CD8-positive, alpha-beta T cell (primary cell): ENCODE measurements at regions of chr3 and their contacts with region 1.

Region 1: GRCh38 chr3:187738331-187739093 is 6.8 kb downstream of the BCL6 start:
- DNase-seq: peak; percentile 38 to 88 (median 65)
- ATAC-seq: peak; percentile 32
- H3K4me3 ChIP-seq: peak overlapping the region; percentile 88 to 94
- H3K4me3 Mint-ChIP-seq: peak overlapping the region; percentile 94
- H3K27ac ChIP-seq: peak overlapping the region; percentile 44 to 88
- H3K27ac Mint-ChIP-seq: peak overlapping the region; percentile 100
- H3K4me1 ChIP-seq: peaks cover 15% of the 10 kb centered on the region
- H3K4me1 Mint-ChIP-seq: peaks cover 52% of the 10 kb centered on the region
- H3K27me3 ChIP-seq: no peaks in the 10 kb centered on the region
- H3K27me3 Mint-ChIP-seq: no peaks in the 10 kb centered on the region
- CTCF ChIP-seq: peak; percentile 85

Region 2: GRCh38 chr3:187719628-187720336 is 18.7 kb before region 1 on chr3:
- CTCF ChIA-PET with region 1: interaction called, 31 read pairs
- POLR2A ChIA-PET with region 1: interaction called, 3 read pairs
- intact Hi-C with region 1: no loop called
- DNase-seq: no peak
- ATAC-seq: no peak
- H3K4me3 ChIP-seq: no peak overlapping the region
- H3K4me3 Mint-ChIP-seq: no peak overlapping the region
- H3K27ac ChIP-seq: no peak overlapping the region
- H3K27ac Mint-ChIP-seq: no peak overlapping the region
- H3K4me1 ChIP-seq: no peaks in the 10 kb centered on the region
- H3K4me1 Mint-ChIP-seq: no peaks in the 10 kb centered on the region
- H3K27me3 ChIP-seq: no peaks in the 10 kb centered on the region
- H3K27me3 Mint-ChIP-seq: no peaks in the 10 kb centered on the region
- CTCF ChIP-seq: no peak

Region 3: DNA sequence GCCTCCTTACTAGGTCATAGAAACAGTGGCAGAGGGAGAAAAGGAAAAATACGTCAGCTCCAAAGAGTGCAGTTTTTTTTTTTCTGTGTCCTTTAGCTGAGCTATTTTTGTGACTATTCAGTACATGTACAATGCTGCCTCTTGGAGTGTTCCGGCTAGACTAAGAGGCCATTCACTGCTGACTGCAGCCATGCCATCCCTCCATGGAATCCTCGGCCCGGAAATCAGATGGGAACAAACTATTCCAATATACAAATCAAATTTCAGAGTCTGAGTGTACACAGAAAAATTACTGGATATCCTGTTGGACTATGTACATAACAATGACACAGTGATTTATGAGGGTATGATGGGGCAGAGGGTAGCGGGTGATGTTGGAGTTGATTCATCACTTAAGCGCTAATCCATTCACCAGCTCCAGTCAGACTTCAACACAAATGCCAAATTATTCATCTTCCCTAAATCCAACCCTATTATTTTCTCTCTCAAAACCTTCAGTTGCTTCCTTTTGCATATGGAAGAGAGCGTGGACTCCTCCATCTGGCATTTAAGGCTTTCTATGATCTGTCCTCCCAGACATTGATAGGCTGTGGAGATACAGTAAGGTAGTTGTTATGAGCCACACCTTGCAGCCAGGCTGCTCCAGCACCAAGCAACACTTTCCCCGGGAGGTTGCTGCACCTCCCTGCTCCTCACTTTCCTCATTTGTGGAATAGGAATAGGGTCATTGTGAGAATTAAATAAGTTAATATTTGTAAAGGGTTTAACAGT is 524.6 kb after region 1 on chr3:
- CTCF ChIA-PET with region 1: interaction called, 11 read pairs
- POLR2A ChIA-PET with region 1: no interaction called
- intact Hi-C with region 1: no loop called
- DNase-seq: no peak
- ATAC-seq: no peak
- H3K4me3 ChIP-seq: no peak overlapping the region
- H3K4me3 Mint-ChIP-seq: no peak overlapping the region
- H3K27ac ChIP-seq: no peak overlapping the region
- H3K27ac Mint-ChIP-seq: no peak overlapping the region
- H3K4me1 ChIP-seq: no peaks in the 10 kb centered on the region
- H3K4me1 Mint-ChIP-seq: peaks cover 4% of the 10 kb centered on the region
- H3K27me3 ChIP-seq: no peaks in the 10 kb centered on the region
- H3K27me3 Mint-ChIP-seq: no peaks in the 10 kb centered on the region
- CTCF ChIP-seq: no peak

Region 4: GRCh38 chr3:188439080-188439479 is 700.6 kb after region 1 on chr3:
- CTCF ChIA-PET with region 1: interaction called, 3 read pairs
- POLR2A ChIA-PET with region 1: no interaction called
- intact Hi-C with region 1: loop called in 1 of 2 experiments (anchors 5 kb)
- DNase-seq: peak in 6 of 9 experiments; percentile 20 to 78 (median 34)
- ATAC-seq: peak; percentile 88
- H3K4me3 ChIP-seq: no peak overlapping the region
- H3K4me3 Mint-ChIP-seq: peak overlapping the region; percentile 48
- H3K27ac ChIP-seq: peak overlapping the region in 1 of 2 experiments; percentile 78
- H3K27ac Mint-ChIP-seq: peak overlapping the region; percentile 41
- H3K4me1 ChIP-seq: peaks cover 17% of the 10 kb centered on the region
- H3K4me1 Mint-ChIP-seq: peaks cover 44% of the 10 kb centered on the region
- H3K27me3 ChIP-seq: no peaks in the 10 kb centered on the region
- H3K27me3 Mint-ChIP-seq: no peaks in the 10 kb centered on the region
- CTCF ChIP-seq: no peak

Region 5: GRCh38 chr3:188830893-188831292 is 1092.4 kb after region 1 on chr3:
- CTCF ChIA-PET with region 1: interaction called, 7 read pairs
- POLR2A ChIA-PET with region 1: interaction called, 3 read pairs
- intact Hi-C with region 1: loop called in 1 of 2 experiments (anchors 5 kb)
- DNase-seq: peak in 1 of 9 experiments; percentile 9
- ATAC-seq: no peak
- H3K4me3 ChIP-seq: no peak overlapping the region
- H3K4me3 Mint-ChIP-seq: no peak overlapping the region
- H3K27ac ChIP-seq: no peak overlapping the region
- H3K27ac Mint-ChIP-seq: no peak overlapping the region
- H3K4me1 ChIP-seq: peaks cover 8% of the 10 kb centered on the region
- H3K4me1 Mint-ChIP-seq: peaks cover 14% of the 10 kb centered on the region
- H3K27me3 ChIP-seq: no peaks in the 10 kb centered on the region
- H3K27me3 Mint-ChIP-seq: no peaks in the 10 kb centered on the region
- CTCF ChIP-seq: no peak

Region 6: GRCh38 chr3:188974856-188975599 is 1236.5 kb after region 1 on chr3:
- CTCF ChIA-PET with region 1: interaction called, 18 read pairs
- POLR2A ChIA-PET with region 1: no interaction called
- intact Hi-C with region 1: no loop called
- DNase-seq: peak in 6 of 9 experiments; percentile 10 to 80 (median 54)
- ATAC-seq: peak; percentile 80
- H3K4me3 ChIP-seq: no peak overlapping the region
- H3K4me3 Mint-ChIP-seq: peak overlapping the region; percentile 22
- H3K27ac ChIP-seq: peak overlapping the region; percentile 0 to 39
- H3K27ac Mint-ChIP-seq: peak overlapping the region; percentile 73
- H3K4me1 ChIP-seq: peaks cover 14% of the 10 kb centered on the region
- H3K4me1 Mint-ChIP-seq: peaks cover 25% of the 10 kb centered on the region
- H3K27me3 ChIP-seq: no peaks in the 10 kb centered on the region
- H3K27me3 Mint-ChIP-seq: peaks cover 10% of the 10 kb centered on the region
- CTCF ChIP-seq: no peak

Region 7: GRCh38 chr3:189324538-189325138 is 1586.1 kb after region 1 on chr3:
- CTCF ChIA-PET with region 1: interaction called, 3 read pairs
- POLR2A ChIA-PET with region 1: no interaction called
- intact Hi-C with region 1: loop called (anchors 5 to 10 kb)
- DNase-seq: peak; percentile 44 to 97 (median 81)
- ATAC-seq: peak; percentile 96
- H3K4me3 ChIP-seq: peak overlapping the region in 1 of 2 experiments; percentile 6
- H3K4me3 Mint-ChIP-seq: peak overlapping the region; percentile 75
- H3K27ac ChIP-seq: peak overlapping the region in 1 of 2 experiments; percentile 55
- H3K27ac Mint-ChIP-seq: peak overlapping the region; percentile 95
- H3K4me1 ChIP-seq: peaks cover 44% of the 10 kb centered on the region
- H3K4me1 Mint-ChIP-seq: peaks cover 68% of the 10 kb centered on the region
- H3K27me3 ChIP-seq: no peaks in the 10 kb centered on the region
- H3K27me3 Mint-ChIP-seq: no peaks in the 10 kb centered on the region
- CTCF ChIP-seq: no peak